A549 (cell line): ENCODE measurements at regions of chr17 and their contacts with region 1.

Region 1: GRCh38 chr17:45277216-45277849 is 15.4 kb upstream of the SPATA32 start:
- DNase-seq: peak; percentile 96
- ATAC-seq: peak; percentile 80 to 82
- H3K4me3 ChIP-seq: no peak overlapping the region
- H3K27ac ChIP-seq: peak overlapping the region; percentile 52 to 72
- H3K4me1 ChIP-seq: peaks cover 29% of the 10 kb centered on the region
- CTCF ChIP-seq: peak; percentile 92
- EP300 ChIP-seq: no peak
- POLR2A ChIP-seq: no peak
- RAD21 ChIP-seq: peak; percentile 91 to 93

Region 2: DNA sequence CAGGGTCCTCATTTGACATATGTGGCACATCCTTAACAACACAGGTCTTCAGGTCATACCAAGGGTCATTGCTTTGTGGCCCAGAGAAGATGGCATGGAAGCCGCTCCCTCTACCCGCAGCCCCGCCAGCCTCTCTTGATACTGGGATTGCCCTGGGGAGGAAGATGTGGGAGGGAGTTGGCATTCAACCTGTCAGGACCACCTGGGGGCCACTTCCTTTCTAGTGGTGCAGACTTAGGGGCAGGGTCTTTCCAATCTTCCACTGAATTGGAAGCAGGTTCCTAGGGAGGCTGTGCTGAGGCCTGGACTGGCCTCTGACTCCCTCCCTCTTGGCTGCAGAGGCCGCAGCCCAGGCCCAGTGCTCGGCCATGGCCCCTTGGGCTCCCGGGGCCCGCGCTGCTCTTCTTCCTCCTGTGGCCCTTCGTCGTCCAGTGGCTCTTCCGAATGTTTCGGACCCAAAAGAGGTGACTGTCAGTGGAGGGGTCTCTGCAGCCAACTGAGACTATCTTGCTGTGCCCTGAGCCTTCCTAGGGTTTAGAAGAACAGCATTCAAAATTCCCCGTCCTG is 134.1 kb before region 1 on chr17:
- CTCF ChIA-PET with region 1: no interaction called
- POLR2A ChIA-PET with region 1: no interaction called
- DNase-seq: no peak
- ATAC-seq: no peak
- H3K4me3 ChIP-seq: no peak overlapping the region
- H3K27ac ChIP-seq: no peak overlapping the region
- H3K4me1 ChIP-seq: peaks cover 13% of the 10 kb centered on the region
- CTCF ChIP-seq: no peak
- EP300 ChIP-seq: no peak
- POLR2A ChIP-seq: no peak
- RAD21 ChIP-seq: no peak

Region 3: GRCh38 chr17:45228763-45229539 is 48.4 kb before region 1 on chr17:
- CTCF ChIA-PET with region 1: interaction called, 28 read pairs
- POLR2A ChIA-PET with region 1: no interaction called
- DNase-seq: peak; percentile 96 to 99
- ATAC-seq: peak; percentile 63 to 77
- H3K4me3 ChIP-seq: peak overlapping the region; percentile 9; the same call in 1 of the 3 replicates
- H3K27ac ChIP-seq: peak overlapping the region; percentile 97
- H3K4me1 ChIP-seq: peaks cover 85% of the 10 kb centered on the region
- CTCF ChIP-seq: no peak
- EP300 ChIP-seq: peak; percentile 93 to 99
- POLR2A ChIP-seq: peak; percentile 33
- RAD21 ChIP-seq: no peak; a peak in 3 of 5 replicates

Region 4: DNA sequence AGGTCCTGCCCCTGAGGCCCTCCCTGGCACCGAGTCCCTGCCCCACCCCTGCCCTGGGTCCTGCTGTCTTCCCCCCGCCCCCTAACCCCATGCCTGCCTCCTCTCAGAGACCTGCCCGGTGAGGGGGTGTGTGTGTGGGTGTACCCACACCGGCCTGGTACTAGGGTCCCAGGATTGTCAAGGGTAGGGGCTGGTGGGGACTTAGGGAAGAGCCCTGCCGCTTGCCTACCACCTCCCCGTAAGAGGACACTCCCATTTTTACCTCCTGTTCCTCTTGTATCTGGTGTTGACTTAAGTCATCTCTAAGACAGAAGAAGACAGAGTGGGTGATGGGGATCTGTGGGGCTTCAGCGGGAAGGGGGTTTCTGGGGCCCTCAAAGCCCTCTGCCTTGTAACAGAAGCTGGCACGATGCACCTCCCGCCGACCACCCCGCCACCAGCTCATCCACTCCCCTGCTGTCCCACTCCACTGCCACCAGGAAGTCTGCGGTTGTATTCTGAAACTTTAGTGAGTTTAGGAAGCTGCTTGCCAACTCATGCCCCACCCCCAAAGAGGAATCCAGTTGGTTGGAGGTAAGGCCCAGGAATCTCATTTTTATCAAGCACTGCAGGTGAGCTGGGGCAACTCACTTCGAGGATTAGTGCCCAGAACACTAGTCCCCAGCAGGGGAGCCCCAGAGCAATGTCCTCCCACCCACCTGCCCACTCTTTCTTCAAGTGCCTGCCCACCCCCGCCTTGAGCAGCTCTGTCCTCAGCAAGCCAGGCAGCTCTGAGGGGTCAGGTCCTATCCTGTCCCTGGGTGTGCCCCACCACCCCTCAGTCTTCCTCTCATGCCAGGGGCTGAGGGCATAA is 21.0 kb before region 1 on chr17:
- CTCF ChIA-PET with region 1: interaction called, 63 read pairs
- POLR2A ChIA-PET with region 1: no interaction called
- DNase-seq: no peak
- ATAC-seq: peak; percentile 21 to 25; a peak in 4 of 6 replicates
- H3K4me3 ChIP-seq: no peak overlapping the region
- H3K27ac ChIP-seq: peak overlapping the region in 1 of 2 experiments; percentile 42; a peak in 2 of 6 replicates
- H3K4me1 ChIP-seq: peaks cover 22% of the 10 kb centered on the region
- CTCF ChIP-seq: no peak
- EP300 ChIP-seq: no peak
- POLR2A ChIP-seq: no peak
- RAD21 ChIP-seq: no peak

Region 5: DNA sequence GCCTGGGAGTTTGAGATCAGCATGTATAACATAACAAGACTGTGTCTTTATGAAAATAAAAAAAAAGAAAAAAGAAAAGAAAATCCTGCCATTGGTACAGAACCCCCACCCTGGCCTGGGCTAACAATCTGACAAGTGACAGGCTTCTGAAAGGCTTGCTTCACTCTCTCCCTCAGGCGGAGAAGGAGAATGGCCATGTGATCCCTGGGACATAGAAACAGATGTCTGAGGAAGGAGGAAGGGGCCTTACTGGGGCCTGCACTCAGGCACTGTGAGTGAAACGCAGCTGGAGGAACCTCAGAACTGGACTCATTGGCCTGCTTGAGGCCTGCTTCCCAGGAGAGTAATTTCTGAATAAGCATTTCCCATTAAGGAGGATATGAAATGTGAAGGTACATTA is 22.0 kb after region 1 on chr17:
- CTCF ChIA-PET with region 1: interaction called, 291 read pairs
- POLR2A ChIA-PET with region 1: interaction called, 7 read pairs
- DNase-seq: no peak
- ATAC-seq: peak in 1 of 2 experiments; percentile 18; a peak in 3 of 6 replicates
- H3K4me3 ChIP-seq: no peak overlapping the region
- H3K27ac ChIP-seq: peak overlapping the region; percentile 48 to 61
- H3K4me1 ChIP-seq: peaks cover 91% of the 10 kb centered on the region
- CTCF ChIP-seq: no peak
- EP300 ChIP-seq: no peak
- POLR2A ChIP-seq: no peak
- RAD21 ChIP-seq: no peak

Region 6: DNA sequence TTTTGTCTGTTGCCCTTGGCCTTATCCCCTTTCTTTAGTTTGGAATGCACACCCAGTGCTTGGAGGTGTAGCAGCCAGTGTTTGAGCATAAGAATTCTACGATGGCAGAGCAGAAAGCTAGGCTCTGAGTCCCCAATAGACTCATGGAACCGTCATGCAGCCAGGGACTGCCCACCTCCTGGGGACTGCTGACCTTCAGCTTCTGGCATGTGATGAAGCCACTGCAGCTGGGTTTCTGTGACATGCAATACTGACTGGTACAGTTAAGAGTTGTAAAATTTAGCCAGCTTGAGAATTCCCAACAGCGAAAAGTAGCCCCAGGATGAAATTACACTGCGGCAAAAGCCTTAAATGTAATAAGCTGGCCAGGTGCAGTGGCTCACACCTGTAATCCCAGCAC is 48.5 kb after region 1 on chr17:
- CTCF ChIA-PET with region 1: interaction called, 108 read pairs
- POLR2A ChIA-PET with region 1: no interaction called
- DNase-seq: no peak
- ATAC-seq: no peak
- H3K4me3 ChIP-seq: no peak overlapping the region
- H3K27ac ChIP-seq: peak overlapping the region in 1 of 2 experiments; percentile 38; a peak in 1 of 6 replicates
- H3K4me1 ChIP-seq: peaks cover 34% of the 10 kb centered on the region
- CTCF ChIP-seq: no peak
- EP300 ChIP-seq: no peak
- POLR2A ChIP-seq: no peak
- RAD21 ChIP-seq: no peak

Region 7: DNA sequence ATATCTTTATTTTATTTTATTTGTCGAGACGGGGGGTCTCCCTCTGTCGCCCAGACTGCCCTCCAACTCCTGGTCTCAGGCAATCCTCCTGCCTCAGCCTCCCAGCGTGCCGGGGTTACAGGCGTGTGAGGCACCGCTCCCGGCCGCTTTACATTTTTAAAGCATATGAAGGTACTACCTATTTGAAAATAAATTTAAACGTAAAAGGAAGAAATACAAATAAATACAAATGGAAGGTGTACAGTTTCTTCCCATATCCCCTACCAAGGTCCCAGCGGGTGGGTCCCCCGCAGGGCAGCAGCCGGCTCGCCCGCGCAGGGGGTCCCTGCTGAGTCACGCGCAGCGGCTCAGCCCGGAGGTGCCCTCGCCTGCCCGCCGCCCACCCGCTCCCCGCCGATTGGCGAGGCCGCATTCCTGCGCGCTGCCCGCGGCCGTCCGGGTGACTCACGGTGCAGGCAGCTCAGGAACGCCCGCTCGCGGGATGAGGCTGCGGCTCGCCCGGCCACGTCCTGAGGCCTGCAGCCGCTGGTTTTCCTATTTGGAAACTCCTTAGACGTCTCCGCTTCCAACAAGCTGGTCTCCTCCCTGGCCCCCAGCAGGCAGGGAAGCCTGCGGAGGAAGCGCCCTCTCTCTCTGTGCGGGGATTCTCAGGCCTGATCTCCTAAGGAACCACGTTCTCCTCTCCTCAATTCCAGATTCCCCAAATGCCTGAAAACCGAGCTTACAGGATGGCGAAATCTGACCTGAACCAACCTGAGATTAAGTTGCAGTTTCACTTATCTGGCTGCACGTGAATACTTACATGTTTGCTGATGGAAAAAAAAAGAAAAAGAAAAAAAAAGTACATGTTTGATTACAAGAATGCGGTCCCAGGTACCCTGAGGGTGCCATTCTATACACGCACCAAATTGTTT is 94.3 kb after region 1 on chr17:
- CTCF ChIA-PET with region 1: interaction called, 60 read pairs
- POLR2A ChIA-PET with region 1: interaction called, 8 read pairs
- DNase-seq: peak; percentile 98
- ATAC-seq: peak; percentile 93 to 95
- H3K4me3 ChIP-seq: no peak overlapping the region; the same call in 2 of the 3 replicates
- H3K27ac ChIP-seq: peak overlapping the region; percentile 95 to 97
- H3K4me1 ChIP-seq: peaks cover 84% of the 10 kb centered on the region
- CTCF ChIP-seq: no peak; the same call in 1 of the 3 replicates
- EP300 ChIP-seq: peak; percentile 97 to 99
- POLR2A ChIP-seq: no peak; the same call in 1 of the 2 replicates
- RAD21 ChIP-seq: peak; percentile 44 to 71; a peak in 4 of 5 replicates